Activated CD4-positive, alpha-beta T cell treated with anti-CD3 and anti-CD28 coated beads, Interleukin-2, amount 10 ng/mL, durations not matched to agents 7 days and 5 days (primary cell): ENCODE measurements at regions of chr1 and their contacts with region 1.

Region 1: GRCh38 chr1:32773018-32773763 is 44.0 kb downstream of the YARS1 start:
- DNase-seq: peak; percentile 78
- H3K4me3 Mint-ChIP-seq: no peak overlapping the region
- H3K27ac Mint-ChIP-seq: no peak overlapping the region
- H3K4me1 Mint-ChIP-seq: peaks cover 9% of the 10 kb centered on the region
- H3K27me3 Mint-ChIP-seq: no peaks in the 10 kb centered on the region

Region 2: GRCh38 chr1:32521165-32521564 is 252.0 kb before region 1 on chr1:
- CTCF ChIA-PET with region 1: interaction called, 12 read pairs
- POLR2A ChIA-PET with region 1: no interaction called
- DNase-seq: no peak
- H3K4me3 Mint-ChIP-seq: peak overlapping the region; percentile 69
- H3K27ac Mint-ChIP-seq: peak overlapping the region; percentile 71
- H3K4me1 Mint-ChIP-seq: peaks cover 4% of the 10 kb centered on the region
- H3K27me3 Mint-ChIP-seq: no peaks in the 10 kb centered on the region

Region 3: GRCh38 chr1:32706491-32706890 is 66.7 kb before region 1 on chr1:
- CTCF ChIA-PET with region 1: interaction called, 50 read pairs
- POLR2A ChIA-PET with region 1: no interaction called
- DNase-seq: no peak
- H3K4me3 Mint-ChIP-seq: no peak overlapping the region
- H3K27ac Mint-ChIP-seq: no peak overlapping the region
- H3K4me1 Mint-ChIP-seq: peaks cover 12% of the 10 kb centered on the region
- H3K27me3 Mint-ChIP-seq: peaks cover 21% of the 10 kb centered on the region

Region 4: DNA sequence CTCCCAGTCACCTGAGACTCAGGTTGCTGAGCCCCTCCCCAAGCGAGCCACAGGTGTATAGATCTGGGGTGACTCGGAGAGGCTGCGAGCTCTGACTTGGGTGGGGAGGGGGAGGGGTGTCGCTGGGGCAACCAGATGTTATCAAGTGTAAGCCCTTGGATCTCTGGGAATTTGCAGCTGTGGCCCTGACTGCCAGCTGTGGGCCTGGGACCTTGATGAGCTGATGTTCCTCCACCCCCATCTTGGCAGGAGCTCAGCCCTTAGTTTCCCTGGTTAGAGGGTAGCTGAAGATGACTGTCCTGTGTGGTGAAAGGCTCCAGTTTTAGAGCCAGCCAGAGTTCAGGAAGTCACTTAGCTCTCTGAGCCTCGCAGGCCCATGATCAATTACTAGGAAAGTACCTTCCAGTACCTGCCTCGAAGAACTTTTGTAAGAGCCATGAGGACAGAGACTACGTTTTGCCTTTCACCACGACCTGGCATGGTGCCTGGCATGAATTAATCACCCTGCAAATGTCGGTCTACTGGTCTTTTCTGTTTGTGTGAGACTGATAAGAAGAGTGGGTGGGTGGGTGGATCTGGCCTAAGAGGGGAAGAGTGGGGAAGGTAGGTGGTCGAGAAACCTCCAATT is 11.8 kb before region 1 on chr1:
- CTCF ChIA-PET with region 1: interaction called, 12 read pairs
- POLR2A ChIA-PET with region 1: no interaction called
- DNase-seq: no peak
- H3K4me3 Mint-ChIP-seq: no peak overlapping the region
- H3K27ac Mint-ChIP-seq: no peak overlapping the region
- H3K4me1 Mint-ChIP-seq: peaks cover 20% of the 10 kb centered on the region
- H3K27me3 Mint-ChIP-seq: peaks cover 3% of the 10 kb centered on the region

Region 5: GRCh38 chr1:32886004-32886827 is 113.0 kb after region 1 on chr1 and contains the start of gene HPCA:
- CTCF ChIA-PET with region 1: no interaction called
- POLR2A ChIA-PET with region 1: no interaction called
- DNase-seq: peak; percentile 45
- H3K4me3 Mint-ChIP-seq: no peak within 1 kb of the TSS
- H3K27ac Mint-ChIP-seq: no peak within 1 kb of the TSS
- H3K4me1 Mint-ChIP-seq: peaks cover 3% of the 10 kb centered on the region
- H3K27me3 Mint-ChIP-seq: peaks cover 59% of the 10 kb centered on the region
- total RNA-seq, gene HPCA: not detected

Region 6: DNA sequence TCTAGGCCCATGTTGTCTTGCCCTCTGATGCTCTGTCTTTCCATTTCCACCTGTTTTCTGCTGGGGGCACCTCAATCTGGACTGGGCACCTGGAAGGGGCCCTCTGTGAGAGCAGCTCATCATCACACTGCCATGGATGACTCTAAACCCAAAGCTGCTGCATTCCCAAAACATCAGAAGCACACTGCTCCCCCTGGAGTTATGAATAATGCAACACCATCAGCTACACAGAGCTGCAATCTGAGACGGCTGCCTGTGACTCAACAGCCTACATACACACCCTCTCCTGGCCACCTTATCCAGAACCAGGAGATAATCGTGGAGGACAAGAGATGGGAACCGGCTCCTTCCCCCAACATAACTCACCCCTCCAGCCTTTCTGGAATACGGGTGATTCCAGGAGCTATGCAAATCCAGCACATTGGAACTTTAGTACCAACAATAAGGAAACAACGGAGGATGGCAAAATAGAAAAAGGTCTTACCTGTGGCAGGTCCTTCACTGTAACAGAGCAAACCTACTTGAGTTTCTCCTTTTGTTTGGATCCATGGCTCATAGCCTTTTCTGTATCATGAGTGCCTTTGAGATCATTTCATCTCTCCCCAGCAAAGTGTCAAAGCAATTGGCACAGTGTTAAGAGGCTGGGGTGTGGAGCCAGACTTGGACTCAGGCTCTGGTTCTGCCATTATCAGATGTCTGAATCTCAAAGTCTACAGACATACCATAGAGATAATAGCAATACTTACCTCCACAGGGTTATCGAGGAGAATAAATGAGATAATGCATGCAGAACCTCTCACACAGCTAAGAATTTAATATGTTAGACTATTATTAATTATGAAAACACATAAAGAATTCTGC is 234.2 kb after region 1 on chr1:
- CTCF ChIA-PET with region 1: no interaction called
- POLR2A ChIA-PET with region 1: no interaction called
- DNase-seq: no peak
- H3K4me3 Mint-ChIP-seq: no peak overlapping the region
- H3K27ac Mint-ChIP-seq: no peak overlapping the region
- H3K4me1 Mint-ChIP-seq: peaks cover 2% of the 10 kb centered on the region
- H3K27me3 Mint-ChIP-seq: no peaks in the 10 kb centered on the region